Naive thymus-derived CD4-positive, alpha-beta T cell (primary cell): ENCODE measurements at regions of chr3 and their contacts with region 1.

Region 1: GRCh38 chr3:138417559-138417982 is 16.8 kb upstream of the ESYT3 start:
- DNase-seq: peak; percentile 8 to 60 (median 47)
- ATAC-seq: peak; percentile 74
- H3K4me3 ChIP-seq: no peak overlapping the region
- H3K4me3 Mint-ChIP-seq: no peak overlapping the region
- H3K27ac ChIP-seq: no peak overlapping the region
- H3K27ac Mint-ChIP-seq: no peak overlapping the region
- H3K4me1 ChIP-seq: no peaks in the 10 kb centered on the region
- H3K4me1 Mint-ChIP-seq: peaks cover 0 to 7% (median 0%) of the 10 kb centered on the region in 7 donors
- H3K27me3 ChIP-seq: no peaks in the 10 kb centered on the region
- H3K27me3 Mint-ChIP-seq: peaks cover 12 to 28% (median 19%) of the 10 kb centered on the region in 5 donors

Region 2: GRCh38 chr3:138668107-138668506 is 250.5 kb after region 1 on chr3:
- CTCF ChIA-PET with region 1: no interaction called
- POLR2A ChIA-PET with region 1: no interaction called
- intact Hi-C with region 1: no loop called
- DNase-seq: no peak
- ATAC-seq: no peak
- H3K4me3 ChIP-seq: no peak overlapping the region
- H3K4me3 Mint-ChIP-seq: no peak overlapping the region
- H3K27ac ChIP-seq: no peak overlapping the region
- H3K27ac Mint-ChIP-seq: no peak overlapping the region
- H3K4me1 ChIP-seq: no peaks in the 10 kb centered on the region
- H3K4me1 Mint-ChIP-seq: peaks cover 0 to 3% (median 0%) of the 10 kb centered on the region in 7 donors
- H3K27me3 ChIP-seq: no peaks in the 10 kb centered on the region
- H3K27me3 Mint-ChIP-seq: no peaks in the 10 kb centered on the region

Region 3: DNA sequence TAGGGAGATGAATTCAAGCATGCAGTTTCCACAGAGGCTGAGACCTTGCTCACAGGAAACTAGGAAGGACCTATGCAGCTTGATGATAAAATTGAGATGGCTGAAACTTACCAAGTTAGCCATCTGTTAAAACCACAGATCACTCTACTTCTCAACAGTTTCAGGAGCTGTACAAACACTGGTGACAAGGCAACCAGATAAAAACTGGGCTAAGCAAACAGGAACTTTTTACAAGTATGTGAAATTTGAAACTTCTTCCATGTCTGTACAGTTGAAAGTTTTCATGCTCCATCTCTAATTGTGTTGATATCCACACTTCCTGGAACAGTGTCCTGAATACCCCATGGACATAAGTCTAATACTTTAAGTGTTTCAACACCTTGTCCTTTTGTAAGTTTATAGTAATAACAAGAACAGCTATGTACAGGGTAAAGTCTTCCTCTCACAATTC is 269.2 kb after region 1 on chr3:
- CTCF ChIA-PET with region 1: no interaction called
- POLR2A ChIA-PET with region 1: no interaction called
- intact Hi-C with region 1: loop called in 1 of 2 experiments (anchors 10 kb)
- DNase-seq: no peak
- ATAC-seq: peak; percentile 63
- H3K4me3 ChIP-seq: no peak overlapping the region
- H3K4me3 Mint-ChIP-seq: no peak overlapping the region
- H3K27ac ChIP-seq: no peak overlapping the region
- H3K27ac Mint-ChIP-seq: no peak overlapping the region
- H3K4me1 ChIP-seq: no peaks in the 10 kb centered on the region
- H3K4me1 Mint-ChIP-seq: peaks cover 0 to 7% (median 0%) of the 10 kb centered on the region in 7 donors
- H3K27me3 ChIP-seq: no peaks in the 10 kb centered on the region
- H3K27me3 Mint-ChIP-seq: no peaks in the 10 kb centered on the region